Dendritic cell treated with granulocyte-macrophage colony-stimulating factor and Interleukin-4, amounts not matched to agents 40 ng/mL and 50 ng/mL, for 4 days (primary cell): ENCODE measurements at regions of chr12 and their contacts with region 1.

Region 1: GRCh38 chr12:70353780-70354660 is 12.1 kb upstream of the KCNMB4 start:
- H3K4me3 Mint-ChIP-seq: no peak overlapping the region
- H3K27ac Mint-ChIP-seq: peak overlapping the region; percentile 70
- H3K4me1 Mint-ChIP-seq: peaks cover 13% of the 10 kb centered on the region
- H3K27me3 Mint-ChIP-seq: no peaks in the 10 kb centered on the region

Region 2: GRCh38 chr12:70110085-70110484 is 243.9 kb before region 1 on chr12:
- intact Hi-C with region 1: no loop called
- H3K4me3 Mint-ChIP-seq: no peak overlapping the region
- H3K27ac Mint-ChIP-seq: no peak overlapping the region
- H3K4me1 Mint-ChIP-seq: no peaks in the 10 kb centered on the region
- H3K27me3 Mint-ChIP-seq: no peaks in the 10 kb centered on the region

Region 3: DNA sequence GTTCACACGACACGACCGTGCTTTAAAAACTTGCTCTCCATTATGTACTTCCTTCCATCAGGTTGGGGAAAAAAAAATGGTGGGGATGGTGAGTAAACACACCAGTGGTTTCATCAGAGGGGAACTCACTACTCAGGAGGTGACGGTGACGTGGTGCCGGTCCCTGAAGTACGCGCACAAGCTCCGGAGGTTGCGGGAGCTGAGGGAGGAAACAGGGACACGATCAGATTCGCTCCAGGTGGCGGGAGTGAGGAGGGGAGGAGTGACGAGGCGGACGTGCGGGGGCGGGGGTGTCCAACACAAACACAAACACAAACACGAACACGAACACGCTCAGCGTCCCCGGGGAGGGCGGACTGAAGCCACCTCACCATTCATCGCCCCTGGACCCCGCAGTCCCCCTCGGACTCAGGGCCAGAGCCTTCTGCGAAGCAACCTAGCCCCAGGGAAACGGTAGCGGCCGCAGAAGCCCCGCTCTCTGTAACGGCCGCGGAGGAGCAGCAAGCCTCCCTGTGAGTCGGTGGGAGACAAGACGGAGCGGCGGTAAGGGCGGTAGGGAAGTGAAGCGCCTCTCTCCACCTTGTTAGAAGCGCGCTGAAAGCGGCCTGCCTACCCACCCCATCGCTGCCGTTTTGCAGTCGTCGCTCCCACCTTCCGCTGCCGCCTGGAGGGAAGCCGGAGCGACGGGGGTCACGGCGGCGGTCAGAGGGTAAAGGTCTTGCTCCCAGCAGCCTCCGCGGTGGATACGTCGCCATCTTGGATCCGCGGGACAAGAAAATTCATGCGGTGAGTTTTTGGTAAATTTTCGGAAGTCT is 111.1 kb before region 1 on chr12 and contains the start of gene CNOT2:
- intact Hi-C with region 1: loop called (anchors 2 kb)
- H3K4me3 Mint-ChIP-seq: peak within 1 kb of the TSS; percentile 99
- H3K27ac Mint-ChIP-seq: peak within 1 kb of the TSS; percentile 96
- H3K4me1 Mint-ChIP-seq: peaks cover 58% of the 10 kb centered on the region
- H3K27me3 Mint-ChIP-seq: no peaks in the 10 kb centered on the region

Region 4: GRCh38 chr12:70278945-70279344 is 75.1 kb before region 1 on chr12:
- intact Hi-C with region 1: no loop called
- H3K4me3 Mint-ChIP-seq: no peak overlapping the region
- H3K27ac Mint-ChIP-seq: no peak overlapping the region
- H3K4me1 Mint-ChIP-seq: peaks cover 12% of the 10 kb centered on the region
- H3K27me3 Mint-ChIP-seq: no peaks in the 10 kb centered on the region

Region 5: GRCh38 chr12:70317781-70318180 is 36.2 kb before region 1 on chr12:
- intact Hi-C with region 1: loop called (anchors 5 kb)
- H3K4me3 Mint-ChIP-seq: no peak overlapping the region
- H3K27ac Mint-ChIP-seq: peak overlapping the region; percentile 63
- H3K4me1 Mint-ChIP-seq: peaks cover 32% of the 10 kb centered on the region
- H3K27me3 Mint-ChIP-seq: no peaks in the 10 kb centered on the region

Region 6: GRCh38 chr12:70487440-70487839 is 133.4 kb after region 1 on chr12:
- intact Hi-C with region 1: no loop called
- H3K4me3 Mint-ChIP-seq: no peak overlapping the region
- H3K27ac Mint-ChIP-seq: no peak overlapping the region
- H3K4me1 Mint-ChIP-seq: no peaks in the 10 kb centered on the region
- H3K27me3 Mint-ChIP-seq: no peaks in the 10 kb centered on the region